ENCODE measurements at regions of chr6 and their contacts with region 1.

Region 1: DNA sequence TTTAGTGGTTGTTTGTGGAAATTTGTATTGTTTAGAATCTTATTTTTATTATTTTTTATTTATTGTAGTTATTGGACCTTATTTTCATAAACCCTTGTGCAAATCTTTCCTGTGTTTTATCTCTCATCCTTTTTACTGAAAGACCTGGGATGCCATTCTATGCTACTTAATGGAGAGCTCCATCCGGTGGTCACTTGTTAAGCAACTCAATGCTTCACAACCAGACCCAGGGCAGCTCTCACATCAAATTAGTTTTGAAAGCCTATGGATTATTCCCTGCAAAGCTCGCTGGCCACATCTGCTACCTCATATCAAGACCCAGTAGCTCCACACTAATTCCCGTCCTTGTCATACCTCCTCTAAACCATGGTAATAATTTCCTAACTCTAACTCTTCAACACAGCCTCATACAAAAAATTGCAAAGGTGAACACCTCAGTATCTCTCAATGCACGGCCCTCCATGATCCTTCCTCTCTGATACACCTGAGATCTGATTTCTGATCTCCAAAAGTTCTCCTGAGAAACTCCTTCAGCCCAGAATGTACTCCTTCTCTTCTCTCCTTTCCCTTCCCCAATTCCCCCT is 296.6 kb upstream of the MANEA start:
- DNase-seq: no peak
- CTCF ChIP-seq: peak; percentile 60

Region 2: GRCh38 chr6:95240514-95240913 is 40.3 kb before region 1 on chr6:
- CTCF ChIA-PET with region 1: no interaction called
- POLR2A ChIA-PET with region 1: no interaction called
- DNase-seq: no peak
- CTCF ChIP-seq: no peak

Region 3: DNA sequence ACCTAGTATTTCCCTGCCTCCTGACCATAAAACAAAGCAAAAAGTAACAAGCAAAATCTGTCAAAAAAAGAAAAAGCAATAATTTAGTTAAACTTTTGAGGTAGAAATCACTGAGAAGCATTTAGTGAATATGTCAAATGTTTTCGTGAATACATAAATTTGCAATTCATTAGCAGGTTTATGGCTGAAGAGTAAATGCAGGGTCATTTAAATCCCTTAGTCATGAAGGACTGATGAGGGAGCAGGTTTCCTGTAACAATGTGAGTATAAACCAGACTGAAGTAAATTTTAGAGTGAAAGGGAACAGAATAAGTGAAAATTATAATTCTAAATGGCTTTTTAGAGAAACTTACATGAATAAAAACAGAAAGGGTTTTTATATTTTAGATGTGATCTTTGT is 16.9 kb before region 1 on chr6:
- CTCF ChIA-PET with region 1: interaction called, 10 read pairs
- POLR2A ChIA-PET with region 1: no interaction called
- DNase-seq: no peak
- CTCF ChIP-seq: no peak